ENCODE measurements at regions of chr5 and their contacts with region 1.

Region 1: DNA sequence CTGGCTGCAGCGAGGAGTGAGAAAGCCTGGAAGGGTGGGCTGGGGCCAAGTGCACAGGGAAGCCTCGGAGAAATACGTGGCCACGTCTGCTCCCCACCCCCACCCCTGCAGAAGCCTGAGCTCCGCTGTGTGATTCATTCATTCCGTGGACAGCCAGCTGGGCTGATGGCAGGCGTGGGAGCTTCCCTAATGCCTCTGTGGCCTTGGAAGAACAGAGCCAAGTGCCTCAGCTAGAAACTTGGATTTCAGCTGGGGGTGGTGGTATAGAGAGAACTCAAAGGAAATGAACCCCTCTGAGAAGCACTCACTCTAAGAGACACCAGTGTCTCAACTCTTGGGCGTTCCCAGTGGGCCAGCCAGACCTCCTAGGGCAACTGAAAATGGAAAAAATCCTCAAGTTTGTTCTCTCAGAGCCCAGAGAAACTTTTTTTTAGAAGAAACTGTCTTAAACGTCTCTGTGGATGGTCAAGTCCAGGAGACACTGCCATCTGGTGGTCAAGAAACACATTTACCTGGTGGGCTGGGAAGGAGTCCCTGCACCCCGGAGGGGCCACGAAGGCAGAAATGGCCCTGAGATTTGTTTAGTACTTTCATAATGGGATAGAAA is 18.0 kb downstream of the ATOX1 start:
- DNase-seq: peak in 2 of 6 donors; percentile 29 to 34
- ATAC-seq: peak; percentile 58 to 82 (median 74)
- H3K4me3 ChIP-seq: no peak overlapping the region
- H3K27ac ChIP-seq: no peak overlapping the region
- H3K4me1 ChIP-seq: no peaks in the 10 kb centered on the region
- H3K27me3 ChIP-seq: no peaks in the 10 kb centered on the region
- CTCF ChIP-seq: peak; percentile 69 to 87 (median 83)

Region 2: GRCh38 chr5:151659001-151659754 is 81.3 kb before region 1 on chr5:
- intact Hi-C with region 1: loop called in 2 of 3 experiments (anchors 5 kb)
- DNase-seq: peak; percentile 54 to 90 (median 76)
- ATAC-seq: peak; percentile 87 to 96 (median 94)
- H3K4me3 ChIP-seq: no peak overlapping the region
- H3K27ac ChIP-seq: peak overlapping the region in 1 of 4 donors; percentile 11
- H3K4me1 ChIP-seq: no peaks in the 10 kb centered on the region
- H3K27me3 ChIP-seq: peaks cover 0 to 6% (median 0%) of the 10 kb centered on the region in 4 donors
- CTCF ChIP-seq: peak; percentile 66 to 76 (median 68)

Measured in pancreas (tissue), 10 donors.